ENCODE measurements at regions of chr17 and their contacts with region 1.

Region 1: GRCh38 chr17:55053855-55054254 is 85.3 kb downstream of the STXBP4 start:
- DNase-seq: no peak
- ATAC-seq: no peak
- H3K4me3 Mint-ChIP-seq: no peak overlapping the region
- H3K27ac Mint-ChIP-seq: no peak overlapping the region
- H3K4me1 Mint-ChIP-seq: no peaks in the 10 kb centered on the region
- H3K27me3 Mint-ChIP-seq: no peaks in the 10 kb centered on the region
- CTCF ChIP-seq: no peak

Region 2: GRCh38 chr17:55295411-55296170 is 241.7 kb after region 1 on chr17:
- CTCF ChIA-PET with region 1: interaction called, 7 read pairs
- POLR2A ChIA-PET with region 1: no interaction called
- intact Hi-C with region 1: loop called (anchors 1 kb)
- DNase-seq: peak; percentile 31
- ATAC-seq: peak; percentile 79
- H3K4me3 Mint-ChIP-seq: no peak overlapping the region
- H3K27ac Mint-ChIP-seq: no peak overlapping the region
- H3K4me1 Mint-ChIP-seq: peaks cover 22% of the 10 kb centered on the region
- H3K27me3 Mint-ChIP-seq: peaks cover 4% of the 10 kb centered on the region
- CTCF ChIP-seq: no peak

Region 3: DNA sequence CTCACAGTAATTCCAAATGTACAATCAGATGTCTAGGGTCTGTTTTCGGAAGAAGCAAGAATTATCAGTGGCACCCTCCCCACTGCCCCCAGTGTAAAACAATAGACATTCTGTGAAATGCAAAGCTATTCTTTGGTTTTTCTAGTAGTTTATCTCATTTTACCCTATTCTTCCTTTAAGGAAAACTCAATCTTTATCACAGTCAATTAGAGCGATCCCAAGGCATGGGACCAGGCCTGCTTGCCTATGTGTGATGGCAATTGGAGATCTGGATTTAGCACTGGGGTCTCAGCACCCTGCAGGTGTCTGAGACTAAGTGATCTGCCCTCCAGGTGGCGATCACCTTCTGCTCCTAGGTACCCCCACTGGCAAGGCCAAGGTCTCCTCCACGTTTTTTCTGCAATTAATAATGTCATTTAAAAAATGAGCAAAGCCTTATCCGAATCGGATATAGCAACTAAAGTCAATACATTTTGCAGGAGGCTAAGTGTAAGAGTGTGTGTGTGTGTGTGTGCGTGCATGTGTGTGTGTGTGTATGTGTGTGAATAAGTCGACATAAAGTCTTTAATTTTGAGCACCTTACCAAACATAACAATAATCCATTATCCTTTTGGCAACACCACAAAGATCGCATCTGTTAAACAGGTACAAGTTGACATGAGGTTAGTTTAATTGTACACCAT is 270.6 kb after region 1 on chr17:
- CTCF ChIA-PET with region 1: no interaction called
- POLR2A ChIA-PET with region 1: no interaction called
- intact Hi-C with region 1: no loop called
- DNase-seq: no peak
- ATAC-seq: no peak
- H3K4me3 Mint-ChIP-seq: no peak overlapping the region
- H3K27ac Mint-ChIP-seq: no peak overlapping the region
- H3K4me1 Mint-ChIP-seq: no peaks in the 10 kb centered on the region
- H3K27me3 Mint-ChIP-seq: no peaks in the 10 kb centered on the region
- CTCF ChIP-seq: no peak